ENCODE measurements at regions of chr9 and their contacts with region 1.

Region 1: GRCh38 chr9:100598641-100599145 is 20.8 kb downstream of the CAVIN4 start:
- DNase-seq: peak; percentile 76 to 94
- H3K4me3 ChIP-seq: peak overlapping the region; percentile 66
- H3K27ac ChIP-seq: 0 out of 2 replicates have a peak overlapping the region, but pooled peaks have one; percentile 17
- H3K4me1 ChIP-seq: peaks cover 12% of the 10 kb centered on the region
- H3K27me3 ChIP-seq: no peaks in the 10 kb centered on the region
- CTCF ChIP-seq: no peak

Region 2: GRCh38 chr9:99184475-99185347 is 1414.0 kb before region 1 on chr9:
- CTCF ChIA-PET with region 1: no interaction called
- POLR2A ChIA-PET with region 1: no interaction called
- intact Hi-C with region 1: loop called (anchors 5 kb)
- DNase-seq: peak; percentile 59 to 75
- H3K4me3 ChIP-seq: no peak overlapping the region
- H3K27ac ChIP-seq: no peak overlapping the region
- H3K4me1 ChIP-seq: no peaks in the 10 kb centered on the region
- H3K27me3 ChIP-seq: peaks cover 9% of the 10 kb centered on the region; the same call in 1 of the 2 replicates
- CTCF ChIP-seq: peak; percentile 90

Region 3: DNA sequence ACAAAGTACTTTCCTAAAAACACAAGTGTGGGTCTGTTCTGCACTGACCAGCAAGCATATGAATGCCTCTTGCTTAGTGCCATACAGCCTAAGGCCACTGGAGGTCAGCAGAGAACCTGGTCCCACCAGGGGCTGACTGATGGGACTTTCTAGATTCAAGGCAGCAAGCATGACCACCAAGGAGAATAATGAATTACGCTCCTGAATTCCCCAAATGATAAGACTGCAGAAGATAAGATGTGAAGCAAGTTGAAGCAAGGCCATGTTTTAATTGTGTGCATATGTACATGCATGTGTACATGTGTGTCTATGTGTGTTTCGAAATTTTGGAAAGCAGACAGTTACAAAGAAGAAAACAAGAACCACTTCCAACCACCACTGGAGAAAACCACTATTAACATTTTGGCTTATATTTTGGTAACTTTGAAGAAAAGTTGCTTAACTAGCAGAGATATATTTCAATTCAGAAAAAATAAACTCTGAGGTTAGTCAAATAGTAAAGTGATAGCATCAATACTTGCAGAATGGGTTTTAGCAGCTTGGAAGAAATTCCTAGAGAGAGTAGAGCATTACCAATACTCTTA is 570.4 kb before region 1 on chr9:
- CTCF ChIA-PET with region 1: no interaction called
- POLR2A ChIA-PET with region 1: no interaction called
- intact Hi-C with region 1: loop called (anchors 1 kb)
- DNase-seq: peak; percentile 45 to 61
- H3K4me3 ChIP-seq: no peak overlapping the region
- H3K27ac ChIP-seq: no peak overlapping the region
- H3K4me1 ChIP-seq: no peaks in the 10 kb centered on the region
- H3K27me3 ChIP-seq: no peaks in the 10 kb centered on the region
- CTCF ChIP-seq: peak; percentile 87

Region 4: GRCh38 chr9:100322954-100323536 is 275.6 kb before region 1 on chr9:
- CTCF ChIA-PET with region 1: no interaction called
- POLR2A ChIA-PET with region 1: no interaction called
- intact Hi-C with region 1: loop called (anchors 2 kb)
- DNase-seq: peak in 1 of 2 experiments; percentile 22
- H3K4me3 ChIP-seq: no peak overlapping the region
- H3K27ac ChIP-seq: no peak overlapping the region
- H3K4me1 ChIP-seq: no peaks in the 10 kb centered on the region
- H3K27me3 ChIP-seq: no peaks in the 10 kb centered on the region
- CTCF ChIP-seq: peak; percentile 72

Region 5: GRCh38 chr9:100437860-100438805 is 160.6 kb before region 1 on chr9:
- CTCF ChIA-PET with region 1: interaction called, 15 read pairs
- POLR2A ChIA-PET with region 1: no interaction called
- intact Hi-C with region 1: no loop called
- DNase-seq: peak; percentile 56 to 70
- H3K4me3 ChIP-seq: no peak overlapping the region
- H3K27ac ChIP-seq: no peak overlapping the region
- H3K4me1 ChIP-seq: no peaks in the 10 kb centered on the region
- H3K27me3 ChIP-seq: no peaks in the 10 kb centered on the region
- CTCF ChIP-seq: peak; percentile 96

Region 6: DNA sequence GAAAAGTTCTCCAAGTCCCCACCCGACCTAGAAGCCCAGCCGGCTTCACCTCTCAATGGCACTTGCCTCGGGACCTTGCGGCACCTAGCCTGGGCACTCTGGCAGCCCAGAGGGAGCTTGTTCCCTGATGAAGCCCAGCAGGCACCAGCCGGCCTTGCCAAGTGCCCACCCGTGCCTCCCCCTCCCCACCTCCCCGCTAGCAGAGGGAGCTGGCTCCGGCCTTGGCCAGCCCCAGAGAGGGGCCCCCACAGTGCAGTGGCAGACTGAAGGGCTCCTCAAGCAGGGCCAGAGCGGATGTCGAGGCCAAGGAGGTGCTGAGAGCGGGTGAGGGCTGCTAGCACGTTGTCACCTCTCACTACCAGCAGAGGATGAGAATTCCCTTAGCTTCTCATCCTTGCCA is 58.4 kb before region 1 on chr9:
- CTCF ChIA-PET with region 1: no interaction called
- POLR2A ChIA-PET with region 1: no interaction called
- intact Hi-C with region 1: no loop called
- DNase-seq: no peak
- H3K4me3 ChIP-seq: no peak overlapping the region
- H3K27ac ChIP-seq: no peak overlapping the region
- H3K4me1 ChIP-seq: no peaks in the 10 kb centered on the region
- H3K27me3 ChIP-seq: no peaks in the 10 kb centered on the region
- CTCF ChIP-seq: no peak

Region 7: DNA sequence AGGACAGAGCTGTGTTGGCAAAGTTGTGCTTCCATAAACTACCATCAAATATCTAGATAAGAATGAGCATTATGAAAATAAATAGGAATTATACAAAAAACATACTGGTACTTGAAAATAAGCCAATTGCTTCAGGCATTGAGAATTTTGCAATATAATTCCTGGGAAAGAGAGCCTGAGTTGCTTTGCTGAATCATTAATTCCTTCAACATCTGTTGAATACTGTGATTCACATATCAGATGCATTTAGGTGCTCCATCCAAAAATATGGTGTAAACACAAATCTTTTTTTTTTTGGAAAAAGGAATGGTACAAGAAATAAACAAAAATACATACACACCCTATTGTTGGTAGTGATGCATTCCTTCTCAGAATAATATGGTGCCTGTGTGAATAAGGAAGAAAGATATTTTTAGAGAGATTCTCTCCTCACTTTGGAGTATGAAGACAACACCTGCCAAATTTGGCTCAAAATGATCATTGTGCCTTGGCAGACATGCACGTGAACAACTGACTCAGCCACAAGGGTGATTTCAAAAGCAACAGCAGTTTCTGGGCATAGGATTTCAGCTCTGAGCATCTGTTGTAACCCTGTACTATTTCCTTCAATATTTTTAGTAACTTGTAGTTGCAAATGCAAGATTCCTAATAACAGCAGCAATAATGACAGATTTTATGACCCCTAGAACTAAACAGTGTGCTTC is 75.9 kb after region 1 on chr9:
- CTCF ChIA-PET with region 1: no interaction called
- POLR2A ChIA-PET with region 1: no interaction called
- intact Hi-C with region 1: no loop called
- DNase-seq: no peak
- H3K4me3 ChIP-seq: no peak overlapping the region
- H3K27ac ChIP-seq: no peak overlapping the region
- H3K4me1 ChIP-seq: no peaks in the 10 kb centered on the region
- H3K27me3 ChIP-seq: no peaks in the 10 kb centered on the region
- CTCF ChIP-seq: no peak

Region 8: GRCh38 chr9:101119206-101119819 is 520.6 kb after region 1 on chr9:
- CTCF ChIA-PET with region 1: no interaction called
- POLR2A ChIA-PET with region 1: no interaction called
- intact Hi-C with region 1: loop called (anchors 2 kb)
- DNase-seq: peak; percentile 38 to 40
- H3K4me3 ChIP-seq: no peak overlapping the region
- H3K27ac ChIP-seq: no peak overlapping the region
- H3K4me1 ChIP-seq: no peaks in the 10 kb centered on the region
- H3K27me3 ChIP-seq: no peaks in the 10 kb centered on the region
- CTCF ChIP-seq: peak; percentile 75

Region 9: DNA sequence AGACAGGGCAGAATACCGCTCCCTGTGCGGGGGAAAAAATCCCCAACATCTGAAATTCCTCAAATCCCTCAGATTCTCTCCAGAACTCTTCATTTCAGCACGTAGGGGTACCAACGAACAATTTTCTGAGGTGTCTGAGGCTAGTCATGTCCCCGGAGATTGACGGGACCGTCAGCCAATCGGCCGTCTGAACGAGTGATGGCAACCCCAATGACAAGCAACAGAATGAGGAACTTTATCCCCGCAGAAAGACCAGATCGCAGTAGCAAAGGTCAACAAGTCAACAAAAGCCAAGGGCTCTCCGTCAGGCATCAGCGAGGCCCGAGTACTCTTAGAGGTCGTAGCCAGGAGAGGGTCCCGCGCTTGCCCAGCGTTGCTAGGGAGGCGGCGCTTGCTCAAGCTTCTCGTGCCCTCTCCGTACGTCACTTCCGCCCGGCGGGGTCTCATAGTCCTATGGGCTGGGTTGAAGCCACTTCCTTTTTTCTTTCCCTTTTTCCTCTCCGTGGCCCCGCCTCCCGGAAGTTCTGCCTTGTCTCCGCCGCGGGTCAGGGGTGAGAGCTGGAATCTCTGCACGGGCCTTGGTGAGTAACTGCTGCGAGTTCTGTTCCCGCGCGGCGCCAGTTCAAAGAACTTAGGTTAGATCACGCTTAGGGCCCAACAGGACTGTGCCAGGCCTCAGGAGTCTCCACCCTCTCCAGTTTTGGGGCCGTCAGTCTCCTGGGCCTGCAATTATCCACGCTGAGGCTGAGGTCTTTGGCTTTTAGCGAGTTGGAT is 934.8 kb after region 1 on chr9 and contains the start of gene RNF20:
- CTCF ChIA-PET with region 1: no interaction called
- POLR2A ChIA-PET with region 1: no interaction called
- intact Hi-C with region 1: loop called (anchors 2 kb)
- DNase-seq: peak; percentile 96 to 98
- H3K4me3 ChIP-seq: peak within 1 kb of the TSS; percentile 63
- H3K27ac ChIP-seq: peak within 1 kb of the TSS; percentile 65
- H3K4me1 ChIP-seq: peaks cover 9% of the 10 kb centered on the region
- H3K27me3 ChIP-seq: no peaks in the 10 kb centered on the region
- CTCF ChIP-seq: no peak
- total RNA-seq, gene RNF20: 55.8 and 58.7 TPM in 2 replicates